Dorsolateral prefrontal cortex (tissue), 120 donors: ENCODE measurements at regions of chr15 and their contacts with region 1.

Region 1: DNA sequence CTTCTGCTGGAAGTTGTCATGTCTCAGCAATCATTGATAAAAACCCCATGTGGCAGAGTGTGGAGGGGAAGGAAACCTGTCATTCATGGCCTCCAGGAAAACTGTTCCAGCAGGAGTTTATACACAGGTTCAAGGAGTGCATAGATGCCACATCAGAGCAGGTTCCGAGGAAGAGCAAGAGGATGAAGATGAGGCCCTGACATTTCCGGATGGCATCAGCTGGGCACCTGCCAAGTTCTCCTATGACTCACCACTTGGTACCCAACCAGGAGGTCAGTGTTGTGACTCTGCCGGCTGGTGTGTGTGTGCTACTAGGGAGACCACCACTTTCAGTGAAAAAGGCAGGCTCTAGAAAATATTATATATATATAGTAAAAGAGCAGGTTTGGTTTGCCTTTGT is 69.4 kb downstream of the NTRK3 start:
- DNase-seq: peak in 6 of 10 donors; percentile 33 to 72 (median 48)
- H3K4me3 ChIP-seq: no peak overlapping the region
- H3K27ac ChIP-seq: peak overlapping the region in 1 of 59 donors; percentile 3
- H3K27me3 ChIP-seq: no peaks in the 10 kb centered on the region
- CTCF ChIP-seq: no peak

Region 2: GRCh38 chr15:88003541-88004332 is 183.4 kb before region 1 on chr15:
- intact Hi-C with region 1: no loop called
- DNase-seq: no peak
- H3K4me3 ChIP-seq: no peak overlapping the region
- H3K27ac ChIP-seq: peak overlapping the region in 5 of 59 donors; percentile 6 to 48 (median 26)
- H3K27me3 ChIP-seq: no peaks in the 10 kb centered on the region
- CTCF ChIP-seq: no peak

Region 3: DNA sequence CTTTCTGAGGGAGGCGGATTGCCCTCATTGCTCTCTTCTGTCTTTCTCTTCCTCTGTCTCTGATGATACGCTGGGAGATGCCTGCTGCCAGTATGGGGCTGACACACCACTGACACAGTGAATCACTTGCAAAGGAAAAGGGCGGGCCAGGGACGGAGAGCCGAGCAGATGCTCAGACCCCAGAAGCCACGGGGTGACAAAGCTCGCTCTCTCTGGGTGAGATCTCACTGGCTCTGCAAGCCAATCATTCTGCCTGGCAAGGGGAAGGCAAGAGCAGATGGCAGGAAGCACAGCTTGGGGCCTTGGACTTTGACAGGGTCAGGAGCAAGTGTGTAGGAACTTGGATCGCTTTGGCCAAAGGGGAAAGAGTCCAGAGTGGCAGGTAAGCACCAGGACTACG is 129.3 kb before region 1 on chr15:
- intact Hi-C with region 1: loop called in 1 of 2 experiments (anchors 10 kb)
- DNase-seq: peak in 1 of 10 donors; percentile 88
- H3K4me3 ChIP-seq: no peak overlapping the region
- H3K27ac ChIP-seq: peak overlapping the region in 1 of 59 donors; percentile 10
- H3K27me3 ChIP-seq: no peaks in the 10 kb centered on the region
- CTCF ChIP-seq: no peak